ENCODE measurements at regions of chr6 and their contacts with region 1.

Region 1: DNA sequence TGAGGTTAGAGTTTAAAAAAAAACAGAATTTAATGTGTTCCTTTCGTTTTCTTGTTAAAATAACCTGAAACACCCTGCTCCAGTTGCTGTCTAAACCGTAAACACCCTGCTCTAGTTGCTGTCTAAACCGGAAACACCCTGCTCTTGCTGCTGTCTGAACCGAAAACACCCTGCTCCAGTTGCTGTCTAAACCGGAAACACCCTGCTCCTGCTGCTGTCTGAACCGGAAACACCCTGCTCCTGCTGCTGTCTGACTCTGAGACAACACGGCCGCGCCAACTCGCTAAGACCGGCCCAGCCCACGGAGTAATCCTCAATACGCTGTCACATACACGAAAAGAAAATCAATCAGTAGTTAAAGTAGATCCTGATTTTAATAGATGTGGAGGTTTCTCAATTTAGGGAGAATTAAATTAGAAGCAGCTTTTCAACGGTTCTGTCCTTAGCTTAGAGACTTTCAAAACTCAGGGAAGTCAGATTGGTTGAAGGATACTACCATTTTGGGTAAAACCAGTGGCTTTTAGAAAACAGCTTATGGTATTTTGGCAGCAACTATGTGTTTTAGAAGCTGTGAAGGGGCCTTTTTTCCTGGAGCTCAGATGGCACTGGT is 98.3 kb downstream of the RAMACL start:
- DNase-seq: peak; percentile 54 to 88 (median 70)
- ATAC-seq: peak; percentile 96 to 97
- H3K4me3 Mint-ChIP-seq: peak overlapping the region; percentile 66 to 91 (median 80)
- H3K27ac Mint-ChIP-seq: peak overlapping the region; percentile 83 to 100 (median 97)
- H3K4me1 Mint-ChIP-seq: peaks cover 11 to 31% (median 28%) of the 10 kb centered on the region in 4 donors
- H3K27me3 Mint-ChIP-seq: no peaks in the 10 kb centered on the region

Region 2: GRCh38 chr6:166411721-166412151 is 76.4 kb before region 1 on chr6:
- POLR2A ChIA-PET with region 1: interaction called, 19 read pairs
- DNase-seq: peak in 7 of 10 donors; percentile 21 to 70 (median 52)
- ATAC-seq: peak; percentile 70 to 77
- H3K4me3 Mint-ChIP-seq: peak overlapping the region; percentile 78 to 85 (median 80)
- H3K27ac Mint-ChIP-seq: peak overlapping the region; percentile 79 to 97 (median 90)
- H3K4me1 Mint-ChIP-seq: peaks cover 42 to 70% (median 66%) of the 10 kb centered on the region in 4 donors
- H3K27me3 Mint-ChIP-seq: no peaks in the 10 kb centered on the region

Region 3: GRCh38 chr6:166419286-166419685 is 68.9 kb before region 1 on chr6:
- POLR2A ChIA-PET with region 1: interaction called, 12 read pairs
- DNase-seq: peak in 3 of 10 donors; percentile 14 to 54 (median 42)
- ATAC-seq: peak; percentile 16 to 52
- H3K4me3 Mint-ChIP-seq: peak overlapping the region; percentile 23 to 75 (median 57)
- H3K27ac Mint-ChIP-seq: peak overlapping the region; percentile 91 to 99 (median 98)
- H3K4me1 Mint-ChIP-seq: peaks cover 39 to 73% (median 70%) of the 10 kb centered on the region in 4 donors
- H3K27me3 Mint-ChIP-seq: no peaks in the 10 kb centered on the region

Region 4: DNA sequence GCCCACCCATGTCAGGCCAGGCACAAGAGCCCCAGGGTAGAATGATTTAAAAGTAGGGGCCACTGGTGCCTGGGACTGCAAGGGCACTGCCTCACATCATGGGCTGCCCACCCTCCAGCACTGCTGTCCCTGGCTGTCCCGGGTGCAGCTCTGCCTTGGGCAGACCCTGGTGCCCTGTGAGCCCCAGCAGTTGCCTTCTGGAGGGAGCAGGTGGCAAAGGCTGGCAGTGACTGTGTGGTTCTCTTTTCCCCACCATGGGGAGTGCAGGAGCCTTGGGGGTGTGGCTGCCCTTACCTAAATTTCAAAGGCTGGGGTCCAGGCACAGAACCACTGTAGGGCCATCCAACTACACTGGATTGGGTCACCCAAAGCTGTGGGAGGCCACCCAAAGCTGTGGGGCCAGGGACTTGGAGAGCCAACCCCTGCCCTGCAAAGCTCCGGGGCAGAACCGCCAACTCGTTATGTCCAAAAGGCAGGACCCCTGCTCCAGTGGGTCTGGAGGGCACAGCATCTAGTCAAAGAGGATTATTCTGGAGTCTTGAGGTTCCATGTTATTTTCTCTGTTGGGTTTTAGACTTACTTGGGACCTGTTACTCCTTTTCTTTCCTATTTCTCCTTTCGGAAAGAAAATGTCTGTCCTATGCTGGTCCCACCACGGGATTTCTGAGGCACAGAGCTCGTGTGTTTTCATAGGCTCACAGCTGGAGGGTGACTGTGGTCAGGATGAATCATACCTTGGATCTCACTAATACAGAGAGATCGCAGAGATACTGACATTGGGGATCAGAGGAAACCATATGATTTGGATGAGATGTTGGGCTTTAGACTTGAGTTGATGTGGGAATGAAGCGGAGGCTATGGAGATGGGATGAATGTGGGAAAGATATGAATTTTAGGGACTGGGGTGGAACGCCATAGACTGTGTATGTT is 33.0 kb after region 1 on chr6:
- POLR2A ChIA-PET with region 1: no interaction called
- DNase-seq: no peak
- ATAC-seq: no peak
- H3K4me3 Mint-ChIP-seq: no peak overlapping the region
- H3K27ac Mint-ChIP-seq: no peak overlapping the region
- H3K4me1 Mint-ChIP-seq: no peaks in the 10 kb centered on the region
- H3K27me3 Mint-ChIP-seq: no peaks in the 10 kb centered on the region

Region 5: DNA sequence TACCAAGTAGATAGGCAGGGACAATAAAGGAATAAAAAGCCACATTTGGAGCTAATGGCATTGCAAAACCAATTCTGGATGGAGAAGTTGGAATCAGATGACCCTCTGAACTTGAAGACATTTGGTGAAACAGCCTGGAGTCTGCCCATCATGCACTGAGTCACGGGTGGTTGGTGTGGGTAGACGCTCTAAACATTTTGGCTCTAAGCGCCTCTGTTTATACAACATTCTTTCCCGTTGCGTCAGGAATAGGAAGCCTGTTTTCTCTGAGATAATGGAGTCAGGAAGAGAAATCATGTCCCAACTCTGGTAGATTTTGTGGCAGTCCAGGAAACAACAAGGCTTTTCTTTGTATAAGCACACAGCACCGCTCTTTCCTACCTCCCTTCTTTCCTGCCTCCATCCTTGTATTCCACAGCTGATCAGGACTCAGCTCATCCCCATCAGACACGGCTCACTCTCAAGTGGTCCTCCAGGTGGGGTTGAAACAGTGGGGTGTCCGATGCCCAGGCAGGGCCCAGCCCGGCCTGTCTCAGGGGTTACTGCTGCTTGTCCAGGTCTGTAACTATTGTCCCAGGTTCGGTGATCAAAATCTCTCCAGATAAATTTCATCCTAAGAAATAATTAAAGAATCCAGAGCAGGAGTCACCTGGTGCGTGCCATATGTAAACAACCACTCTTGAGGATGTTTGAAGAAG is 110.4 kb after region 1 on chr6:
- POLR2A ChIA-PET with region 1: no interaction called
- DNase-seq: no peak
- ATAC-seq: no peak
- H3K4me3 Mint-ChIP-seq: no peak overlapping the region
- H3K27ac Mint-ChIP-seq: no peak overlapping the region
- H3K4me1 Mint-ChIP-seq: peaks cover 0 to 6% (median under 1%) of the 10 kb centered on the region in 4 donors
- H3K27me3 Mint-ChIP-seq: peaks cover 0 to 3% (median 1%) of the 10 kb centered on the region in 5 donors

Region 6: GRCh38 chr6:166627033-166627874 is 139.1 kb after region 1 on chr6 and contains the start of gene RPS6KA2:
- POLR2A ChIA-PET with region 1: interaction called, 12 read pairs
- DNase-seq: peak; percentile 99 to 100 (median 100)
- ATAC-seq: peak; percentile 87 to 92
- H3K4me3 Mint-ChIP-seq: peak within 1 kb of the TSS; percentile 87 to 97 (median 94)
- H3K27ac Mint-ChIP-seq: peak within 1 kb of the TSS in 9 of 10 donors; percentile 75 to 96 (median 91)
- H3K4me1 Mint-ChIP-seq: peaks cover 13 to 26% (median 16%) of the 10 kb centered on the region in 4 donors
- H3K27me3 Mint-ChIP-seq: peaks cover 15 to 47% (median 22%) of the 10 kb centered on the region in 5 donors
- polyA plus RNA-seq, gene RPS6KA2: 2.1 to 4.8 (median 3.2) TPM

Measured in naive thymus-derived CD8-positive, alpha-beta T cell (primary cell).